ENCODE measurements at regions of chr5 and their contacts with region 1.

Region 1: DNA sequence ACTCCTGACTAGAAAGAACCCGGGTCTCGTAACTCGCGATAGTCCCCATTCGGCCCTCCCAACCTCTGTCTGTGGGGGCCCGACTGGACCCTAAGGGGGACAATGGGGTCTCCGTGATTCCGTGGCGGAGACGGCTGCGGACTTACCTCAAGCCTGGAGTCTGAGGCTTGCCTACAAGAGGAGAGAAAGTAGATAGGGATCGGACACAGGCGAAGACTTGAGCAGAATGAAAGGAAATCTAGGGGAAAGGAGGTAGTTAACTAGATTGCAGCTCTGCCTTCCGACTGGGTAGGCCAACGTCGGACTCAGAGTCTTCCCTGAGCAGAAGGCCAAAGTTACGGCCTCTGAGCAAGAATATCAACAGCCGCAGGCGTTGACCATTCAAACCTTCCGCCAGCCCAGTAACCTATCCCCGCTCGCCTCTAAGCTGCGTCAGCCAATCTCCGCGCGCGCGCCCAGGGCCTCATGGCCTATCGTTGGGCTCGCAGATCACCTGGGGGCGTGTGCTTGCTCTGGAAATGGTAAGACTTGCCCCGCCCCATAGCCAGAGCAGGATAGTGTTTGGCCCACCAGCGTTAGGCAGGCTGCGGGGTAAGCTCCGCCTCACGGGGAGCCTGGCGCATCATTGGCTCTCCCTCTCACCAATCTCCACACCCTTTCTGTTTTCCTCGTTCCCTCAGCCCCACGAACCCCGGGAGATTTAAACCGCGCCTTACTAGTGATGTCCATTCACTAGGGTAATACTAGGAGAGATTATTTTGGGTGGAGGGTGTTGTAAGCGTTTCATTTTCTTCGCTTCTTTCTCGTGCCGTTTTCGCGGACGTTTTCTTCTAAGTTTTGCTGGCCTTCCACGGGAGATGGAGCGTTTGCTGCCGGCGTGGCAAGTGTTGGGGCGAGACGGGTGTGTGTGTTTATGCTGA is at the start of gene CDC25C:
- DNase-seq: peak; percentile 99
- H3K4me3 ChIP-seq: peak within 1 kb of the TSS; percentile 83
- H3K27ac ChIP-seq: peak within 1 kb of the TSS; percentile 54
- H3K4me1 ChIP-seq: peaks cover 19% of the 10 kb centered on the region
- CTCF ChIP-seq: no peak
- total RNA-seq, gene CDC25C: 19.2 and 21.8 TPM in 2 replicates

Region 2: DNA sequence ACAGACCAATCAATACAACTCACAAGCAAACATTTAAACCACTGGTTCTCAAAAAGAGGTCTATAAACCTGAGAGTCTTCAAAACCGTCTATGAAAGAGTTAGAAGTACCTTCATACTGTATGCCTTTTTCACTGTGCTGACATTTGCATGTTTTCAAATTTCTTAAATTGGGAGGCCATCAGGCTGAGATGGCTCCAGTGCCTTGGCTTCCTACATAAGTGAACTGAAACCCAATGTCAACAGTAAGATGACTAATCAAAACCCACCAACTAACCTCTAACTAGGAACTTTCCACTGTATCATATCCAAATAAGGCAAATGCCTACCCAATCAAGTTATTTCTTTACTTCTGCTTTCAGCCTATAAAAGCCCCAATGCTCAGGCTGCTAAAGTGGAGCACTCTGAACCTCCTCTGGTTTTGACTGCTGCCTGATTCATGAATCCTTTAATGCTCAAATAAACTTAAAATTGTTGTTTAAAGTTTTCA is 333.9 kb before region 1 on chr5:
- CTCF ChIA-PET with region 1: no interaction called
- POLR2A ChIA-PET with region 1: no interaction called
- intact Hi-C with region 1: no loop called
- DNase-seq: peak; percentile 8
- H3K4me3 ChIP-seq: no peak overlapping the region
- H3K27ac ChIP-seq: no peak overlapping the region
- H3K4me1 ChIP-seq: no peaks in the 10 kb centered on the region
- CTCF ChIP-seq: no peak

Region 3: DNA sequence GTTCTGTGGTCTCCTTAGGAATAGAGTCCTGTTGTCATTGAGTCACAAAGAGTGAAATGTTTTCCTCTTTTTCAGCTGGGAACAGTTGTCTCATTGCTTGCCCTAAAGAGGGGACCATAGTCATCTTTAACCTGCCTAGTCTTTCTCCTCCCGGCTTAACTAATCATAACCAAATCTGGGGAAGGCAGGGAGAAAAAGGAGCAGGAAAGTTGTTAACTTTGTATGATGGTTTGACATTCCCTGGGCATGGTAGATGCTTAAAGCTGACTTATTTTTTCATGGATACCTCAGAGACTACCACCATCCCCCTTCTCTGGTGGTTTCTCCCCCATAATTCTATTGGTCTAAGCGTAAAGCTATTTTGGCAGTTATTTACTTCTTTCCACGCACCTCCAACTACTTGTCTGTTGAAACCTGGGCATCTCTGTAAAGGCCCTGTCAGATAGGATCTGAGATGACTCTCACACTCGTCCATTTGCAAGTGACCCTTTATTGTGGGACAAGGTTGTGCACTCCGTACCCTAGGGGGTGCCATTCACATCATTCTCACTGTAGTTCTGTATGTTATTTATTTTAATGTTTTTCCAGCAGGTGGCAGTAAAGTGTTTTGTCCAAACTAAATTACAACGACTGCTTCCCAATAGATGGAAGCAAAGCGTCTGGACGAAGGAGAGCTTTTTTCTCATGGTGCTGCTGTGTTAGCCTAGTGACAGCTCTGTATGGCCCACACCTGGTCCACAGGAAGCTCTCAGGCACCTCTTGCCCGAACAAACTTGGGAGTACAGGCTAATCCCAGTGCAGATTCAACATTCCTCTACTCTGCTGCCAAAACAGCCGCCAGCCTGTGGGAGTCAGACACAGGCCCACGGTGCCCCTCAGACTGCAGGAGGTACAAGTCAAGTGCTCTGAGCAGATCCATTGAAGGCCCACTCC is 295.8 kb before region 1 on chr5:
- CTCF ChIA-PET with region 1: no interaction called
- POLR2A ChIA-PET with region 1: no interaction called
- intact Hi-C with region 1: loop called (anchors 5 kb)
- DNase-seq: peak; percentile 90
- H3K4me3 ChIP-seq: no peak overlapping the region
- H3K27ac ChIP-seq: no peak overlapping the region
- H3K4me1 ChIP-seq: peaks cover 38% of the 10 kb centered on the region
- CTCF ChIP-seq: peak; percentile 99

Region 4: DNA sequence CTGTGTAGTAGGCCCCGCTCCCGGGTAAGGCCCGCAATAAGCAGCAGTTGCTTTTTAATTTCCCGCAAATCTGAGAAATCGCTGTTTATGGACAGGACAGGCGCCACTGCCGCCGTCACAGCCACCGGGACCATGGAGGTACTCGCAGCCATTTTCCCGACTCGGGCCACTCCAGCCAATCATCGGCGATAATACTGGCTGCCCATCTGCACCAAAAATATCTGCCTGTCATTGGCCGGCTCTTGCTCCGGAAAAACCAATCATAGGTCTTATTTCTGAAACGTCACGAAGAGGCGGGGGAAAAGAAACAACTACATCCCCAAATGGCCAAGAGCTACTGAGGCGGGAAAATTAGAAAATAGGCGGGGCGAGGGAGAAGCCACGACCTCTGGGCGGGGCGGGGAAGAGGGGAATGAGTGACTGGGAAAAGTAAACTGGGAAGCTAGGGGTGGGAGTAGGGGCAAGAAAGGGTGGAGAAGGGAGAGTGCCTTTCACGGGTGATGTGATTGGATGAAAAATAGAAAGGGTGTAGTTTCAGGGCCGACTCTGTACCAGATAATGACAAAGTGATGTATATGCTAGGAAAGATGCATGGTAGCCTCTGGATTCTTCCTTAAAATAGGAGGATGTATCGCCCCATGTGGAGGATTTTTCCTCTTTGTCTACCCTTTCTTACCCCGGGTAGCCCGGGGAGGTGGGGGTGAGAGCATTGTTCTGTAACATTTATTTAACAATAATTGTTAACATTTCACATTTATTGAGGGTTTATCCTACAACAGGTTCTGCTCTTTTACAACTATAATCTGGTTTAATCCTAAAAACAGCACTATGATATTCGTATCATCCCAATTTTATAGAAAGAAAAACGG is 118.3 kb before region 1 on chr5 and contains the start of gene CDC23:
- CTCF ChIA-PET with region 1: no interaction called
- POLR2A ChIA-PET with region 1: interaction called, 4 read pairs
- intact Hi-C with region 1: loop called (anchors 5 kb)
- DNase-seq: peak; percentile 98
- H3K4me3 ChIP-seq: peak within 1 kb of the TSS; percentile 97
- H3K27ac ChIP-seq: peak within 1 kb of the TSS; percentile 43
- H3K4me1 ChIP-seq: peaks cover 15% of the 10 kb centered on the region
- CTCF ChIP-seq: no peak
- total RNA-seq, gene CDC23: 31.8 and 46.7 TPM in 2 replicates

Region 5: DNA sequence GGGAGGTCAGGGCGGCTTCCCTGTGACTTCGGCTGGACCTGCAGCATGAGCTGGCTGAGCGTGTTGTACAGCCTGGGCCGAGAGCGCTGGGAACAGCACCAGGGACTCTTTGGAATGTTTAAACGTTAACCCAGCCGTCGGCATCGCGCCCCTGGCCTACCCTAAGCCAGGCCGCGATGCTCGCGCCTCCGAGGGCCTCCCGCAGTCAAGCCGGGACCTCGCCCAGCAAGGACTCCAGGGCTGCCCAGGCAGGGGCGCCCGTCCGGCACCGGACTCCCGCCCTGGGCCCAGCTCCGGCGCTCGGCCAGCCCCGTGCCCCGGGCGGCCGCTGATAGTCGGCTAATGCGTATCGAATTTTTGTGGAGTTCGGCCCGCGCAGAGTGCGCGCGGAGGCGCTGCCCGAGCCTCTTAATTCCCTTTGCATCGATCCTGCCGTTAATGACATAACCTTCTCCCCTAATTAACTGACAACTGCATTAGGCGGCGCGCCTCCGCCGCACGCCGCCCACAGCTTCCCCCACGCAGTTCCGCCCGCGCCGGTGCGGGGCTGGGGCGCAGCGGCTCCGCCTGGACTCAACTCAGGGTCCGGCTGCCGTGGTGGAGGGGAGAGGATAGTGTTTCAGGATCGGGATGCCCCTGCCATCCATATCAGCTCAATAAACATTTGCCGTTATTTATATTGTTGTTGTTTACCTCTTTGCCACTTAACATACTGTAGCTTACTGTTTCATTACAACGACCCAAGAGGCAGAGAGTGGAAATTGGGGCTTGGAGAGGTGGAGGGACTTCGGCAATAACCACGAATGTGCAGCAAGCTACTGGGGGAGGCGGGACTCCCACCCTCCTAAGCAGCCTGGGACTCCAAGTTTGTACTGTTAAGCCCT is 89.8 kb before region 1 on chr5:
- CTCF ChIA-PET with region 1: no interaction called
- POLR2A ChIA-PET with region 1: no interaction called
- intact Hi-C with region 1: no loop called
- DNase-seq: no peak
- H3K4me3 ChIP-seq: no peak overlapping the region
- H3K27ac ChIP-seq: no peak overlapping the region
- H3K4me1 ChIP-seq: no peaks in the 10 kb centered on the region
- CTCF ChIP-seq: no peak

Region 6: GRCh38 chr5:138352071-138352721 is 20.5 kb after region 1 on chr5 and contains the start of gene KDM3B:
- CTCF ChIA-PET with region 1: interaction called, 8 read pairs
- POLR2A ChIA-PET with region 1: interaction called, 102 read pairs
- intact Hi-C with region 1: no loop called
- DNase-seq: peak; percentile 90
- H3K4me3 ChIP-seq: peak within 1 kb of the TSS; percentile 98
- H3K27ac ChIP-seq: peak within 1 kb of the TSS; percentile 73
- H3K4me1 ChIP-seq: peaks cover 19% of the 10 kb centered on the region
- CTCF ChIP-seq: peak; percentile 91
- total RNA-seq, gene KDM3B: 51.1 and 57.1 TPM in 2 replicates